PC-3 (cell line): ENCODE measurements at regions of chr2 and their contacts with region 1.

Region 1: DNA sequence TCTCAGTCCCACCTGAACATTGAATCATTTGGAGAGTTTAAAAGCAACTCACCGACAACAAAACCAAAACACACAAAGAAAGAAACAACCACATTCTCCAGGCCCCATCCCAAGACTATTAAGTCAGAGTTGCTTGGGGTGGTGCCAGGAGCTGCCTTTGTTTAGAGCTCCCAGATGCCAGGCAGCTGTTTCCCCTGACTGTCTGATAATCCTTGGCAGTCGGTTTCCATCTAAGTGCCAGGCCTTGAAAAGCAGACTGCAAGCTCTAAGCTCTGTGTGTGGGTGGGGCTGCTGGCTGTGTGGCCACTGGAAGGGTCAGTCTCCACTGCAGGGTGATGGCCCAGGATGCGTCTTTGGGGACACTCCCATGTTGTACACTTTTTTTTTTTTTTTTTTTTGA is 255.3 kb upstream of the AGAP1 start:
- DNase-seq: peak; percentile 10
- ATAC-seq: peak; percentile 29; the same call in 1 of the 2 replicates
- H3K4me3 ChIP-seq: no peak overlapping the region
- H3K27ac ChIP-seq: no peak overlapping the region
- H3K4me1 ChIP-seq: peaks cover 9% of the 10 kb centered on the region; the same call in 1 of the 2 replicates
- H3K27me3 ChIP-seq: no peaks in the 10 kb centered on the region
- CTCF ChIP-seq: no peak

Region 2: DNA sequence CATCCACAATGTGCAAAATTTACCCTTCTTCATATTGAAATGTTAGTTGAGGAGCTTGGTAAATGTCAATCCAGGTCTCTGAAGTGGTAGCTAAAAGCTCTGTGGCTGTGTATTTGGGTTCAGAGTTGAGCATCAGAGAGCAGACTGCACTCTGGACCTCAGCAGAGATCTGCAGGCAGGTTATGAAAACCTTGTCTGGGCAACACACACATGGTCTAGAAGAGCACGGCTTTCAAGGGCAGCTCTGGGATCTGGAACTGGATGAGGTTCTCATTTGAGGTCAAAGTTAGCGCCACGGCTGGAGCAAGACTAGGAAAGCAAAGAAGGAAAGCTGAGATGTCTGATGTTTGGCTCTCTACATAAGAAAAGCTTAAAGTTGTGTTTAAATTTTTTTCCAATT is 43.7 kb before region 1 on chr2:
- CTCF ChIA-PET with region 1: no interaction called
- POLR2A ChIA-PET with region 1: interaction called, 12 read pairs
- intact Hi-C with region 1: no loop called
- DNase-seq: no peak
- ATAC-seq: no peak
- H3K4me3 ChIP-seq: no peak overlapping the region
- H3K27ac ChIP-seq: no peak overlapping the region
- H3K4me1 ChIP-seq: no peaks in the 10 kb centered on the region
- H3K27me3 ChIP-seq: no peaks in the 10 kb centered on the region
- CTCF ChIP-seq: no peak